ENCODE measurements at regions of chr1 and their contacts with region 1.

Region 1: DNA sequence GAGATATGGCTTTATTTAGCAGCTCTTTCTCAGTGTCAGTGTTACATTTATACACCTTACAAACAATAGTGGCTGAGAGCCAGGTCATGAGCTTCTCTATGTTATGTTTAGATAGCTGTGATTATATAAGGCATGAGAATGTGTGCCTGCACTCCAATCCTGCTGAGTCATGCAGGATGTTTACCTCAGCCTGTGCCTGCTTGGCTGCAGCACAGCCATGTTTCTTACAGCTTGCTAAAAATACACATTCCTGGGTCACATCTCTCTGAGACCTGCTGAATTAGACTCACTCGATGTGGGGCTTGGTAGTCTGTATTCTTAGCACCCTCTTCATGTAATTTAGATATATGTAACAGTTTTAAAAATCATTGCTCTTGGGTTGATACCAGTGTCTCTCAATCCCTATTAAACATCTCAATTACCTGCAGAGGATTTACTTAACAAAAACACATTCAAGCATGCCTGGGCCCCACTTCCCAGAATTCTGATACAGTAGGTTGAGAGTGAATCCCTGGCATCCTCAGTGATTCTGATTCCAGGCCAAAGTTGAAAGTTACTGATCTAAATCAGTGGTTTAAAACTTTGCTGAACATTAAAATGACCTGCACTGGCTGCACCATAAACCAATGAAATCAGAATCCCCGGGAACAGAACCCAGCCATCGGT is 107.5 kb downstream of the GDAP2 start:
- DNase-seq: no peak
- H3K4me3 ChIP-seq: no peak overlapping the region
- H3K27ac ChIP-seq: peak overlapping the region; percentile 53 to 74
- H3K4me1 ChIP-seq: peaks cover 15 to 44% of the 10 kb centered on the region in 2 donors
- H3K27me3 ChIP-seq: no peaks in the 10 kb centered on the region
- CTCF ChIP-seq: no peak

Region 2: GRCh38 chr1:117572546-117572945 is 249.4 kb before region 1 on chr1:
- intact Hi-C with region 1: no loop called
- DNase-seq: peak in 1 of 2 donors; percentile 58
- H3K4me3 ChIP-seq: no peak overlapping the region
- H3K27ac ChIP-seq: no peak overlapping the region
- H3K4me1 ChIP-seq: no peaks in the 10 kb centered on the region
- H3K27me3 ChIP-seq: no peaks in the 10 kb centered on the region
- CTCF ChIP-seq: no peak

Region 3: GRCh38 chr1:117674521-117675397 is 147.2 kb before region 1 on chr1:
- intact Hi-C with region 1: loop called (anchors 5 kb)
- DNase-seq: no peak
- H3K4me3 ChIP-seq: no peak overlapping the region
- H3K27ac ChIP-seq: peak overlapping the region; percentile 6 to 26
- H3K4me1 ChIP-seq: peaks cover 0 to 25% of the 10 kb centered on the region in 2 donors
- H3K27me3 ChIP-seq: no peaks in the 10 kb centered on the region
- CTCF ChIP-seq: peak in 2 of 3 experiments; percentile 6 to 9

Region 4: DNA sequence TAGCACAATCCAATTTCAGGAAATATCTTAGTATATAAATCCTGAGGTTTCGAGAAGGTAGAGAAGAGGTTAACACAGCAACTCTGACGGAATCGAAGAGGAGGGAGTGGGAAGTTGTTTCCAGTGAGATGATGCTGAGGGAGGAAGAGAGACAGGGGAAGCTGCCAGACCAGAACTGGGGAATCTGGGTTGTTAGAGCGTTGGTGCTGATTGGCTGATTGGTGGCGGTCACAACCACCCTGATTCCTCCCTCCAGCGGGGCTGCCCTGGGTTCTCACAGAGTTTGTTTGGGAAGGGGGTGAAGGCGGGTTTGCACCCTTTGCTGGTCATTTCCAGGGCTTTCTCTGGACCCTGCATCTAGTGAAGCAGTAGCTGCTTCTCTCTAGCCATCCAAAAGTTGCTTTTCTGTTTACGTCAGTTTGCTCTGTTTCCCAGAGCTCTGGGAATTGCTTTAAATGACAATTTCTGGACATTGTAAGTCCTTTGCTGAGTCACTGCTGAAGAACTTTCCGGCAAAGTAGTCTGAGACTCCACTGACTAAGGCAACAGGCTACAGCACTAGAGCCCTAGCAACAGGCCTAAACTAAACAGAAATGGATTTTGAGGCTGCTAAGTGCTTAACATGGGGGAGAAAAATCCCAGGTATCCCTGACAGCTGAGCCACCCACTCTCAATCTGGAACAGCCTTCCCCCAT is 126.0 kb before region 1 on chr1:
- intact Hi-C with region 1: loop called (anchors 5 kb)
- DNase-seq: peak in 1 of 2 donors; percentile 88
- H3K4me3 ChIP-seq: peak overlapping the region in 1 of 2 donors; percentile 52
- H3K27ac ChIP-seq: peak overlapping the region; percentile 88
- H3K4me1 ChIP-seq: peaks cover 12 to 35% of the 10 kb centered on the region in 2 donors
- H3K27me3 ChIP-seq: no peaks in the 10 kb centered on the region
- CTCF ChIP-seq: no peak

Region 5: GRCh38 chr1:117860896-117861610 is 39.1 kb after region 1 on chr1:
- intact Hi-C with region 1: loop called (anchors 5 kb)
- DNase-seq: no peak
- H3K4me3 ChIP-seq: no peak overlapping the region
- H3K27ac ChIP-seq: no peak overlapping the region
- H3K4me1 ChIP-seq: no peaks in the 10 kb centered on the region
- H3K27me3 ChIP-seq: no peaks in the 10 kb centered on the region
- CTCF ChIP-seq: no peak

Measured in ascending aorta (tissue), 2 donors.